HCT116 (cell line): ENCODE measurements at regions of chr5 and their contacts with region 1.

Region 1: DNA sequence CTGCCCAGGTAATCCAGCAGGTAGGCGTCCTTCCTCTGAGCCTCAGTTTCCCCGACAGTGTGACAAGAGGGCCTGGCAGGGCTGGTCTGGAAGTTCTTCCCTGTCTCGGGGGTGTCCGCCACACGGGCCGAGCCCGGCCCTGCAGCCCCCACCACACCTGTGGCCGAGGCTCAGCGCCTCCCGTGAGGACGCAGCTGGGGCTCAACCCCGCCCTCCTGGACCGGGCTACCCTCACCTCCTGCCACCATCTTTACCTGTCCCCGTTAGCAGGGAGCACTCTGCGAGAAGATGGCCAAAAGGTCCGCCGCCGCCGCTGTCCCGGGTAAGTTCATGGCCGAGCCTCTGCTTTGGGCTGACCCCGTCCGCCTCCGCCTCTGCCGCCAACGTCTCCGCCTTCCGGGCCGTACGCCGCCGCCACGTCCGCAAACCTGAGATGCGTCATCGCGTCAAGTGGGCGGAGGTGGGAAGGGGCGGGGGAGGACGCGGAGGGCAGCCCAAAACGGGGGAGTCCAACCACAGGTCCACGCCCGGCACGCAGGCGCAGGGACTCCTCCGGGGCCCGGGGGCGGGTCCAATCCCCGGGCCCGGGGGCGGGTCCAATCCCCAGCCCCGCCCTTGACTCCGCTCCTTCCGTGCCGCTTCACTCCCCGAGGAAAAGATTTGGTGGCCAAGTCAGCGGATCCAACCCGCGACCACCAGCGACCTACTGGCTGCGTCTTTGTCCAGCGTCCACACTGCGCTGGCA is at the start of gene LYSMD3:
- DNase-seq: peak; percentile 92
- ATAC-seq: peak; percentile 96
- H3K4me3 ChIP-seq: peak within 1 kb of the TSS; percentile 83 to 89
- H3K27ac ChIP-seq: peak within 1 kb of the TSS; percentile 89
- H3K4me1 ChIP-seq: peaks cover 3 to 17% of the 10 kb centered on the region in 2 experiments; a peak in 3 of 4 replicates
- H3K27me3 ChIP-seq: no peaks in the 10 kb centered on the region
- CTCF ChIP-seq: no peak
- POLR2A ChIP-seq: peak; percentile 84
- RAD21 ChIP-seq: no peak
- total RNA-seq, gene LYSMD3: 18.0 TPM

Region 2: DNA sequence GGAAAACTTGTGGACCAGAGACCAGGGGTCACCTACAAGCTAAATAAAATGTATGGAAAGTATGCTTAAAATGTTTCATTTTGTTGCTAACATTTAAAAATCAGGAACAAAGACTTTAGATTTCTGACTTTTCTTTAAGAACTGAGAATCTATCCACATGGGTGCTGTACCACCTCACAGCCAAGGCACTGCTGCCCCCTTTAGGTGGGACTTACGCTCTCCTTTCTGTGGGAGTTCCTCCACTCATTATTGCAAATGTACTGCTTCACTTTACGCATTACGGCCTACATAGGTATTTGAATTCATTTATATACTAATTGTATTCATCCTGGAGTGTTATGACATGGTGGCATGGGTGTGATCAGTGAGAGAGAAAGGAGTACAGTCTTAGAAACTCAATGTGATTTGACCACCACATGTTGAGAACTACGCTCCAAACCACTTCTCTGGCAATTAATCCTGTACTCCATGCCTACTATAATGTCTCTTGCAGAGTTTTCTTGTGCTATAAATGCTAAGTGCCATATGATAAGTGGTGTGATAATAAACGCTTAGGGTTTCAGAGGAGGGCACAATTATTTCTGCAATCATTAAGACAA is 95.2 kb before region 1 on chr5:
- CTCF ChIA-PET with region 1: interaction called, 7 read pairs
- POLR2A ChIA-PET with region 1: no interaction called
- RAD21 ChIA-PET with region 1: no interaction called
- intact Hi-C with region 1: loop called (anchors 1 kb)
- DNase-seq: peak; percentile 31
- ATAC-seq: peak; percentile 88
- H3K4me3 ChIP-seq: no peak overlapping the region
- H3K27ac ChIP-seq: no peak overlapping the region
- H3K4me1 ChIP-seq: no peaks in the 10 kb centered on the region
- H3K27me3 ChIP-seq: no peaks in the 10 kb centered on the region
- CTCF ChIP-seq: peak; percentile 37 to 85 (median 81); a peak in 5 of 6 replicates
- POLR2A ChIP-seq: no peak
- RAD21 ChIP-seq: peak; percentile 74

Region 3: DNA sequence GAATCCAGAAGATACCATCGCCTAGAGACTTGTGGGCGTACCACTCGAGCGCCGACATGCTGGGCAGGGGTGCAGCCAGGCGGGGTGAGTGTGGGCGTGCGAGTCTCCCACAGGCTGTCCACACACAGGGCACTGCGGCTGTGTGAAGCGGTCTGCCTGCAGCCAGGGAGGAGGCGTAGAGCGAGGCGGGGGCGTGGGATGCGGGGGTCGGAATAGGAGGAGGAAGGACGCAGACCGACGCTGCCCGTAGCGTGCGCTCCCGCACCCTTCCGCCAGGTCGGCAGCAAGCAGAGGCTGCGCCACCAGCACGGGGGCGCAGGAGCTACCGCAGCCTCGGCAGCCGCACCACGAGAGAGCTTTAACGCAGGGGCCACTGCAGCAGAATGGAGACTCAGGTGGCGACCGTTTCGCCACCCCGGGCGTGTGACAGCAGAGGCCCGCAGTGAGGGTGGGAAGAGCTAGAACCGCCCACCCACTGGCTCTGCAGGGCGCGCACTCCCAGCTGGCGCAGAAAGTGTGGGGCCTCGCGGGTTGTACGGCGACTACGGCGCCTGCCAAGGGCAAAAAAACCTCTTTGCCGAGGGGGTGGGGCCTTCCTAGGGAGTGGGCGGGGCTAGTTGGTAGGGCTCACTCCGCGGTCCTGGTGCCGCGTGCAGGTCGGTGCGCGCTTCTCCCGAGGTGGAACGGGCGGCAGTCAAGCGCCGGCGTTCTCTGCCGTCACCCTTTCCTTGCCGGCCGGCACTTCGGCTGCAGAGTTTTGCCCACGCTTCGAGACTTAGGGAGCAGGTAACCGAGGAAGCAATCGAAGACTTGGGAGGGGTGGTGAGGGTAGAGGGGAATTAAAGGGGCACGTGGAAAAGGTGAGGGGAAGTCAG is 54.9 kb before region 1 on chr5 and contains the starts of genes MBLAC2 and POLR3G:
- CTCF ChIA-PET with region 1: no interaction called
- POLR2A ChIA-PET with region 1: no interaction called
- RAD21 ChIA-PET with region 1: no interaction called
- intact Hi-C with region 1: loop called (anchors 5 kb)
- DNase-seq: peak; percentile 87
- ATAC-seq: peak; percentile 83
- H3K4me3 ChIP-seq: peak within 1 kb of the TSS; percentile 85
- H3K27ac ChIP-seq: peak within 1 kb of the TSS; percentile 96
- H3K4me1 ChIP-seq: peaks cover 6 to 31% of the 10 kb centered on the region in 2 experiments; a peak in 3 of 4 replicates
- H3K27me3 ChIP-seq: no peaks in the 10 kb centered on the region
- CTCF ChIP-seq: peak in 1 of 3 experiments; percentile 34; a peak in 3 of 6 replicates
- POLR2A ChIP-seq: peak; percentile 89
- RAD21 ChIP-seq: no peak
- total RNA-seq, gene MBLAC2: 5.7 TPM
- total RNA-seq, gene POLR3G: 44.8 TPM